ENCODE measurements at regions of chrX and their contacts with region 1.

Region 1: DNA sequence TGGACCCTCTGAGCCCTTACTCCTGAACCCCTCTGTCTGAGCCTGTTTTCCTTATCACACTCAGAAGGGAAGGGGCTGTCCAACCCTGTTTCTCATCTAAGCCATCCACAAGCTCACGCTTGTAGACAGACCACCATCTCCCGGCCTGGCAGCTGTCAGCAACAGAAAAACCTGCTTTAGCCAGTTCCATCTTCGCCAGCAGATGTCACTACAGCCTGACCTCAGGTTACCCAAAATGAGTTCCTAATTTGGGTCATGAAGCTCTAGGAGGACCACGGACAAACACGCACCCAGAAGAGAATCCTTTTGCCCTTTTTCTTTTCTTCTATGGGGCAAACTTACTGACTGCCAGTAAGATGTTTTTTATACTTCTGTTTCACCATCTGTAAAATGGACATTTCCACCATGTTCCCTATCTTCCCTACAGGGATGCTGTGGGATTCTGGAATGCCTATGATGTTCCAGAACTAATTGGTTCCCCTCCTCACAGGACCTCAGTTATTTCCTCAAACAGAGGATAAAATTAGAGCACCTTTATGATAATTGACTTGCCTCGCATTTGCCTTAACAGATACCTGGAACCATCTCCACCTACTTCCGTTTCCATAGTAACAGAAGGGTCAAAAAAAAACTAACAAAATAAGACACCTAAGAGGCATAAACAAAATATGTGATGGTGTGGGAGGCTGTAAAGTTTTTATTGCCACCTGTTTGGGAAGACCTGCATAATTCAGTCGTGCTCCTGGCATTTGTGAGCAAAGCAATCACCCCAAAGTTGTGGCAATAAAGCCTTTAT is 445.2 kb downstream of the BCOR start:
- DNase-seq: peak; percentile 18
- H3K4me3 Mint-ChIP-seq: no peak overlapping the region
- H3K27ac Mint-ChIP-seq: no peak overlapping the region
- H3K4me1 Mint-ChIP-seq: no peaks in the 10 kb centered on the region
- H3K27me3 Mint-ChIP-seq: peaks cover 58% of the 10 kb centered on the region
- CTCF ChIP-seq: peak; percentile 24

Region 2: GRCh38 chrX:39675601-39676000 is 23.1 kb after region 1 on chrX:
- CTCF ChIA-PET with region 1: no interaction called
- intact Hi-C with region 1: no loop called
- DNase-seq: no peak
- H3K4me3 Mint-ChIP-seq: no peak overlapping the region
- H3K27ac Mint-ChIP-seq: no peak overlapping the region
- H3K4me1 Mint-ChIP-seq: no peaks in the 10 kb centered on the region
- H3K27me3 Mint-ChIP-seq: peaks cover 37% of the 10 kb centered on the region
- CTCF ChIP-seq: no peak

Region 3: GRCh38 chrX:40266490-40267333 is 614.2 kb after region 1 on chrX:
- CTCF ChIA-PET with region 1: interaction called, 4 read pairs
- intact Hi-C with region 1: loop called (anchors 10 kb)
- DNase-seq: peak; percentile 75
- H3K4me3 Mint-ChIP-seq: peak overlapping the region; percentile 67
- H3K27ac Mint-ChIP-seq: no peak overlapping the region
- H3K4me1 Mint-ChIP-seq: peaks cover 16% of the 10 kb centered on the region
- H3K27me3 Mint-ChIP-seq: no peaks in the 10 kb centered on the region
- CTCF ChIP-seq: peak; percentile 47

Measured in Calu3 (cell line).